PC-3 (cell line): ENCODE measurements at regions of chr5 and their contacts with region 1.

Region 1: GRCh38 chr5:115309751-115310370 is 13.4 kb upstream of the CCDC112 start:
- DNase-seq: peak; percentile 82
- ATAC-seq: peak; percentile 65
- H3K4me3 ChIP-seq: no peak overlapping the region
- H3K27ac ChIP-seq: no peak overlapping the region
- H3K4me1 ChIP-seq: 0 out of 2 replicates have a peak, but pooled peaks cover 5% of the 10 kb centered on the region
- H3K27me3 ChIP-seq: no peaks in the 10 kb centered on the region
- CTCF ChIP-seq: peak; percentile 80

Region 2: GRCh38 chr5:115343855-115344254 is 34.0 kb after region 1 on chr5:
- CTCF ChIA-PET with region 1: no interaction called
- POLR2A ChIA-PET with region 1: no interaction called
- intact Hi-C with region 1: loop called (anchors 2 kb)
- DNase-seq: peak; percentile 57
- ATAC-seq: peak; percentile 92
- H3K4me3 ChIP-seq: no peak overlapping the region
- H3K27ac ChIP-seq: peak overlapping the region; percentile 37
- H3K4me1 ChIP-seq: peaks cover 18% of the 10 kb centered on the region
- H3K27me3 ChIP-seq: no peaks in the 10 kb centered on the region
- CTCF ChIP-seq: no peak

Region 3: GRCh38 chr5:115429343-115429940 is 119.6 kb after region 1 on chr5:
- CTCF ChIA-PET with region 1: no interaction called
- POLR2A ChIA-PET with region 1: no interaction called
- intact Hi-C with region 1: loop called (anchors 2 kb)
- DNase-seq: peak; percentile 86
- ATAC-seq: peak; percentile 78
- H3K4me3 ChIP-seq: peak overlapping the region; percentile 38
- H3K27ac ChIP-seq: peak overlapping the region; percentile 96
- H3K4me1 ChIP-seq: peaks cover 66% of the 10 kb centered on the region
- H3K27me3 ChIP-seq: no peaks in the 10 kb centered on the region
- CTCF ChIP-seq: no peak

Region 4: GRCh38 chr5:115544436-115545350 is 234.8 kb after region 1 on chr5 and contains the start of gene FEM1C:
- CTCF ChIA-PET with region 1: no interaction called
- POLR2A ChIA-PET with region 1: no interaction called
- intact Hi-C with region 1: loop called (anchors 1 kb)
- DNase-seq: peak; percentile 95
- ATAC-seq: peak; percentile 95
- H3K4me3 ChIP-seq: peak within 1 kb of the TSS; percentile 79
- H3K27ac ChIP-seq: peak within 1 kb of the TSS; percentile 69
- H3K4me1 ChIP-seq: peaks cover 16% of the 10 kb centered on the region; the same call in 1 of the 2 replicates
- H3K27me3 ChIP-seq: no peaks in the 10 kb centered on the region
- CTCF ChIP-seq: no peak
- total RNA-seq, gene FEM1C: 8.4 and 9.1 TPM in 2 replicates

Region 5: GRCh38 chr5:115586601-115587048 is 276.8 kb after region 1 on chr5:
- CTCF ChIA-PET with region 1: no interaction called
- POLR2A ChIA-PET with region 1: no interaction called
- intact Hi-C with region 1: loop called (anchors 1 kb)
- DNase-seq: peak; percentile 53
- ATAC-seq: peak; percentile 51
- H3K4me3 ChIP-seq: no peak overlapping the region
- H3K27ac ChIP-seq: no peak overlapping the region
- H3K4me1 ChIP-seq: peaks cover 13% of the 10 kb centered on the region; the same call in 1 of the 2 replicates
- H3K27me3 ChIP-seq: no peaks in the 10 kb centered on the region
- CTCF ChIP-seq: peak; percentile 75